Right lobe of liver (tissue), 6 donors: ENCODE measurements at regions of chr1 and their contacts with region 1.

Region 1: GRCh38 chr1:46442317-46443161 is 47.1 kb upstream of the DMBX1 start:
- DNase-seq: peak; percentile 68 to 73 (median 69)
- ATAC-seq: peak; percentile 77 to 90 (median 87)
- H3K4me3 ChIP-seq: peak overlapping the region in 1 of 3 donors; percentile 18
- H3K27ac ChIP-seq: no peak overlapping the region
- H3K4me1 ChIP-seq: peaks cover 0 to 4% (median 0%) of the 10 kb centered on the region in 4 donors
- H3K27me3 ChIP-seq: peaks cover 0 to 3% of the 10 kb centered on the region in 2 donors
- CTCF ChIP-seq: peak; percentile 66 to 90 (median 81)
- POLR2A ChIP-seq: no peak

Region 2: DNA sequence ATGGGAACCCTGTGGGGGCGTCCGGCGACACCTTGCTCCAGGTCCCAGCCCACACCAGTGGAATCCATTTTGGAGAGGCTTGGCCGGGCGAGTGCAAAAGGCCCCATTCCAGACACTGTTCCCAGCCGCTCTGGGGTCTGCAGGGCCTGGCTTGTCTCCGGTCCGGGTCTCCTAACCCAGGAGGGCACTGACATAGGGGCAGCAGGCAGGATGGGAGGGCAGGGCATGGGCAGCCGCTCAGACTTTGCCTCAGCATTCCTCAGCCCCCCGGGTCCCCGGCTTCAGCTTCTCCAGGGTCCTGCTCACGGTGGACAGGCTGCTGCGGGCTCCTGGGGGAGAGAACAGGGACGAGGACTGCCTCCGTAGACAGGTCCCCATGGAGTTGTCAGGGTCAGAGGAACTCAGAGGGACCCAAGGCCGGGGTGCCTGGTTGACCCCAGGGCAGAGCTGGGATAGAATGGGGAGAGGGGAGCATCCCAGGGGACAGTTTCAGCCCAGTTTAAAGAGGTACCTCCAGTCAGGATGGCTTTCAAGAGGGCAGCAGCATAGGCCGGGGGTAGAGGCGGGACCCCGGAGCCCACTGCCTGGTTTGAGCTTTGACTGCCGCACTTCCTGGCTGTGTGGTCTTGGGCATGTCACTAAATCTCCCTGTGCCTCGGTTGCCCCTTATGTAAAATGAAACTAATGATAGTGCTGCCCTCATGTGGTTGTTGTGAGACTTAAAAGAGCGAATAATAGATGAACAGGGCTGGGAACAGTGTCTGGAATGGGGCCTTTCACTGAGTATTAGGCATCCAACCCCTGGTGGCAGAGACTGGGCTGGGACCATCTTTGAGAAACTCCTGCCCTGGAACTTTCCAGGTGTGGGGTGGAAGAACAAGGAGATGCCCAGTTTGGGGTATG is 105.2 kb after region 1 on chr1:
- intact Hi-C with region 1: loop called in 1 of 2 experiments (anchors 10 kb)
- DNase-seq: peak in 1 of 3 donors; percentile 43
- ATAC-seq: peak; percentile 46 to 77 (median 66)
- H3K4me3 ChIP-seq: no peak overlapping the region
- H3K27ac ChIP-seq: no peak overlapping the region
- H3K4me1 ChIP-seq: no peaks in the 10 kb centered on the region
- H3K27me3 ChIP-seq: no peaks in the 10 kb centered on the region
- CTCF ChIP-seq: peak in 3 of 4 donors; percentile 32 to 46 (median 44)
- POLR2A ChIP-seq: no peak

Region 3: DNA sequence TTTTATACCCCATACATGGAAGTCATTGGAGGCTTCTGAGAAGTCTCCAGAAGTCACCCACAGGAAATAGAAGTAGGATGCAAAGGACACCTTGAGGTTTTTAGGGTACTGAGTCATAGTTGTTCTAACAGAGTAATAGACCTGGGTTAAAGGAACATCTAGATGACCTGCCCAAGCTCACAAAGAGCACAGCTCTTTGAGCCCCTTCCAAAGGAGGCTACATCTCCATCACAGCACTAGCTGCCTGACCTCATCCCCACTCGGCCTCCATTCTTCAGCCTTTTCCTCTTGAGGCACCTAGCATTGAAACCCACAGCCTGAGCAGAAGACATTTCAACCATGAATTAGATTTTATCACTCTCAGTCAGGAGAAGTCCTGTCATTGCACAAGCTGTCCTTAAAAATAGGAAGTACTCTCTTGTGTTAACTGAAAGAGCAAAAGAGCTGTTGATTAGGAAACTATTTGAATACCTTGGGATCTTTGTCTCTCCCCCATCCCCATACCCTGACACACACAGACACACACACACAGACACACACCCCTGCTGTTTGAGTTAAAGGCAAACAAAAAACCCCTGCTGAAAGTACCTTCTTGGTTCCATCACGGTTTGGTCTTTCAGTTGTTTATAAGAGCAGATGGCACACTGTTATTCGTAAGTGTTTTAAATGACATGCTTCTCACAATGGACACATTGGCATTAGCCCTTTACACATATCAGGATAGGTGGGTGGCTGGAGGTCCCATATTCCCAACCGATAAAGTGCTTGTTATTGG is 139.3 kb after region 1 on chr1:
- intact Hi-C with region 1: no loop called
- DNase-seq: no peak
- ATAC-seq: peak in 3 of 4 donors; percentile 27 to 39 (median 36)
- H3K4me3 ChIP-seq: no peak overlapping the region
- H3K27ac ChIP-seq: no peak overlapping the region
- H3K4me1 ChIP-seq: no peaks in the 10 kb centered on the region
- H3K27me3 ChIP-seq: no peaks in the 10 kb centered on the region
- CTCF ChIP-seq: no peak
- POLR2A ChIP-seq: no peak